ENCODE measurements at regions of chr22 and their contacts with region 1.

Region 1: DNA sequence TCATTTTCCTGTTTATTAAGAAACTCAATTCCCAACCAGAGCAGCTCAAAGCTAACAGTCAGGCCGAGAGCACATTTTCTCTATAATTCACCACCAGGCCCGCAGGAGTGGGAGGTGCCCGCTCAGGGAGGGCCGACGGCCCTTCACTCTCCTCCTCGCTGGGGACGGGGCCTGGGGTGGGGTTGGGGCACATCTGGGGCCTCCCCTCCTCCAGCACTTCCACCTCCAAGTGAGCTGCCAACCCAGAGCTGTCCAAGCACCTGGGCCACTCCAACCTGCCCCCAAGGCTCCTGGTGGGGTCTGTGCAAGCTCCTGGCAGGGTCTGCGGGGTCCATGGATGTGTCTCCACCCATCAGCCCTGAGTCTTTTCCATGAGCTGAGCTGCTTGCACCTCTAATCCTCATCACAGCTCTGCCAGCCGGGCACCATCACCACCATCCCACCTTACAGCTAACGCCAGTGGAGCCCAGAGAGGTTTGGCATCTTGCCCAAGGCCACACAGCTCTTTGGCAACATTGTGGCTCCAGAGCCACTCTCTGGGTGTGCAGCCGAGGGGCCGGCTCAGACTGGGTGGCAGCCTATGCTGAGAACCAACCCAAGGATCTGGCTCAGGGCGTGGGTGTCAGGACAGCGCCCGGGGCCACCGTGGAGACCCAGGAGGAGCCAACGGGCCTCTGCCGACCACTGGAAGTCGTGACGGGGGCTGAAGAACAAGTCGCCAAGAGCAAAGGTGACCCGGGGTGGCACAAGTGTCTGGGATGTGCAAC is 193.5 kb downstream of the BRD1 start:
- DNase-seq: no peak
- H3K4me3 ChIP-seq: no peak overlapping the region
- H3K27ac ChIP-seq: no peak overlapping the region
- H3K4me1 ChIP-seq: no peaks in the 10 kb centered on the region
- H3K27me3 ChIP-seq: peaks cover 90% of the 10 kb centered on the region
- CTCF ChIP-seq: no peak

Region 2: GRCh38 chr22:49196046-49196511 is 438.1 kb before region 1 on chr22:
- CTCF ChIA-PET with region 1: interaction called, 14 read pairs
- POLR2A ChIA-PET with region 1: no interaction called
- intact Hi-C with region 1: no loop called
- DNase-seq: no peak
- H3K4me3 ChIP-seq: no peak overlapping the region
- H3K27ac ChIP-seq: no peak overlapping the region
- H3K4me1 ChIP-seq: no peaks in the 10 kb centered on the region
- H3K27me3 ChIP-seq: peaks cover 100% of the 10 kb centered on the region
- CTCF ChIP-seq: no peak